ENCODE measurements at regions of chr9 and their contacts with region 1.

Region 1: DNA sequence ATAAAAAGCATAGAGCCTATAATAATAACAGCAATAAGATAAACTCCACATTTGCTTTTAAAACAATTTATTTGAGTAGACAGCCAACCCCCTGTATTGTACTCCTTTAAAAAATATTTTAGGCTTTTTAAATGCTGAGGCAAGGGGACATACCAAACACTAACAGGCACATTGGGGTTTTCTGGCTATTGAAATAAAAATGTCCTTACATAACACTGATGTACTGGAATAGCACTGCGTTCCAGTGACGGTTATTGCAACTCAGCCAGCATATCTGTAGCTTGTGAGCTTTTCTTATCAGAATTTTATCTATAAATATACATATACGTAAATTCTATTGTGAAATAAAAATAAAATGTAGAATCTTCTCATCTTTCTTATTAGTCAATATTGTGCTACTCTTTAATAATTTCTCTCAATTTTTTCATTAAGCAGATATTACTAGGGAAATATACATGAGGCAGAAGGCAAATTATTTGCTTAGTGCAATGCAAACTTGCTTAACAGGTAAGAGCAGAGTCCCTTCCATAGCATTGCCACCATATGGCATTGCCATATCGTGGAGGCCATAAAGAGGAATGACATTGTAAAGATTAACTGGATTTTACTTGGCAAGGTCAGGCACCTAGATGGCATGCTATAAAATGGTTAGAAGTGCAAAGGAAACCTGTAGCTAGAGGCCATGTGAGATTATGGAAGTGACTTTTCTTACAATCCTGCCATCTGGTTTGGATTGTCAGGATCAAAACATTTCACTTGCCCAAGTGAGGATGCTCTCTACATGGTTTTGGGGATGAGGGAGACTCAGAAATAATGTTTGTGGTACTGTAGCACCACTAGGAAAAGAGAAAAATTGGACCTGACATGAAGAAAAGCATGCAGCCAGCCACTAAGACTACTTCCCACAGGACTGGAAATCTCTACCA is 94.8 kb upstream of the CDKN2B start:
- DNase-seq: no peak
- ATAC-seq: peak; percentile 38 to 51
- H3K4me3 ChIP-seq: no peak overlapping the region
- H3K27ac ChIP-seq: peak overlapping the region; percentile 37 to 76 (median 62)
- H3K4me1 ChIP-seq: peaks cover 20 to 29% of the 10 kb centered on the region in 2 donors
- H3K27me3 ChIP-seq: no peaks in the 10 kb centered on the region
- CTCF ChIP-seq: no peak
- POLR2A ChIP-seq: no peak

Region 2: DNA sequence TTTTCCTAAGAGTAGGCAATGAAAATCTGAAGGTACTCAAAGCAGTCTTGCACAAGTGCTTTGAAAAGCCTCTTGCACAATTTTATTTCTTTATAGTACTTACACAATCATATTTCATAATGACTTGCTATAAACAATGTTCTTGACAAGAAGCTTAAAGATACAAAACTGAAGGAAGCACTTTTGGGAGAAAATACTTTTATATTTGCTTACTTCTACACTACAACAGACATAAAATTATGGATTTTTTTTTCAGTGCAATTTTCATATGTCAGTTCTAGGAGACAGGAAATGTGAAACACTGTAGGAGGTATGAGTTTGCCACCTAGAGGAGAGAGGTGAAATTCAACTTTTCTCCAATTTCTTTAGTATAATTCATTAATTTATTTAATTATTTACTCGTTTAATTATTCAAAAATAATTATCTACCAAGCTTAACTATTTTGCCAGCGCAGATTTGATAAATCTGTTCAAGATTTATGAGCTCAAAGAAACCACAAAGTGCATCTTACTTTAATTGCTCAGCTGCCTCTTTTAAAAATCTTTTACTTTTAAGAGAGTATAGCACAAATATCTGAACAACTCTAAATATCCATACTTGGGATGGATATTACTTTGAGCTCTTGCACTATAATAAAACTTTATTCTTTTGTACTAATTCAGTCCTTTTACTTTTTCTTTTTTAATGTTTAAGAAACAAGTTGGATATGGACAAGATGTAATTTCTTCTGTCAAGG is 65.8 kb before region 1 on chr9:
- in situ Hi-C with region 1: no loop called
- intact Hi-C with region 1: loop called (anchors 2 kb)
- DNase-seq: no peak
- ATAC-seq: peak; percentile 77 to 91
- H3K4me3 ChIP-seq: no peak overlapping the region
- H3K27ac ChIP-seq: peak overlapping the region; percentile 77 to 82 (median 80)
- H3K4me1 ChIP-seq: peaks cover 32 to 50% of the 10 kb centered on the region in 2 donors
- H3K27me3 ChIP-seq: no peaks in the 10 kb centered on the region
- CTCF ChIP-seq: peak in 4 of 5 experiments; percentile 29 to 58 (median 54)
- POLR2A ChIP-seq: no peak

Region 3: DNA sequence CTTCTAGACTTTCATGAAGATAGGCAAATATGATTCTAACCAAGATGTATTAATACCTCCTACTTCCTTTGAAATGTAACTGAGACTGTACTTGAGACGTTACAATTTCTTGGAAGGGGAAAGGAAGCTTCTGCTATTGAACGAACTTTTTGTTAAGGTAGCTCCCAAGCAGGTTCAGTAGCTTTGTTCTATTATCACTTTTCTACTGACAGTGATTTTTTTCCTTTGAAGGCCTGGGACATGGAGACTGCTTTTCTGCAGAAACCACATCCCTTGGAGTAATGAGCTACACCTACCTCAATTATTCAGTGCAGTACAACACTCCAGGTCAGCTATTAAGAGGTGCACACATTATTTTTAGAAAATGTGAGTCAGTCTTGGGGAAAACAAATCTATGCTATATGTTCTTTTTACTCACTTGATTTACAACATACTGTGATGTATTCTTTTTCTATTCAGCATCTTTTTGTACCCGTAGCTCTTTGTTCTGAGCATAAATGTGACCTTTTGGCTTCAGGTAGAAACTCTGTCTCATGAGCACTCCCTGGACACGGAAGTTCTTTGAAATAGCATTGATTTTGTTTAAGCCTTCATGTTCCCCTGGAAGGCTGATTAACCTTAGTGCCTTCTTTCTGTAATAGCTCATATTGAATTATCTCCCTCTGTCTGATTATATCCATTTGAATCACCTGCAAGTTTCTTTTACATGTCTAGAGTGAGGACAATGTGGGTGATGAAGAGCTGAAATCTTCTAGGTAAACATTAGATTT is 38.3 kb before region 1 on chr9:
- in situ Hi-C with region 1: no loop called
- intact Hi-C with region 1: loop called (anchors 5 kb)
- DNase-seq: no peak
- ATAC-seq: no peak
- H3K4me3 ChIP-seq: no peak overlapping the region
- H3K27ac ChIP-seq: no peak overlapping the region
- H3K4me1 ChIP-seq: peaks cover 0 to 18% of the 10 kb centered on the region in 2 donors
- H3K27me3 ChIP-seq: no peaks in the 10 kb centered on the region
- CTCF ChIP-seq: no peak
- POLR2A ChIP-seq: no peak

Measured in gastrocnemius medialis (tissue), 4 donors.